ENCODE measurements at regions of chr20 and their contacts with region 1.

Region 1: GRCh38 chr20:34312544-34313217 is 9.5 kb upstream of the AHCY start:
- DNase-seq: no peak
- H3K4me3 ChIP-seq: peak overlapping the region; percentile 51
- CTCF ChIP-seq: peak; percentile 100

Region 2: DNA sequence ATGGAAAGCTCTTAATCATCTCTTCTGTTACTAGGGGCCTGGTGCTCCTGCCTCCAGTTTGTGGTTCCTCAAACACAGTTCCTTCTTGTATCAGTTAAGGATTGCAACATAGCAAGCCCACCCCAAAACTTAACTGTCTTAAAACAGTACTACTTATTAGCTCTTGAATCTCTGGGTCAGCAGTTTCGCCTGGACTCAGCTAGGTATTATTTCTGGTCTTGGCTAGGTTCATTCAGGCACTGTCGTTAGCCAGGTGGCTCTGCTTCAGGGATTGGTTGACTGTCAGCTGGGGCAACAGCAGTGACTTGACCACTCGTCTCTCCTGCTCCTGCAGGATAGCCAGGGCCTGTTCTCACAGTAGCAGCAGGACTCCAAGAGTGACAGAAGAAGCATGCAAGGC is 348.9 kb before region 1 on chr20:
- CTCF ChIA-PET with region 1: no interaction called
- POLR2A ChIA-PET with region 1: no interaction called
- DNase-seq: no peak
- H3K4me3 ChIP-seq: no peak overlapping the region
- CTCF ChIP-seq: no peak

Region 3: DNA sequence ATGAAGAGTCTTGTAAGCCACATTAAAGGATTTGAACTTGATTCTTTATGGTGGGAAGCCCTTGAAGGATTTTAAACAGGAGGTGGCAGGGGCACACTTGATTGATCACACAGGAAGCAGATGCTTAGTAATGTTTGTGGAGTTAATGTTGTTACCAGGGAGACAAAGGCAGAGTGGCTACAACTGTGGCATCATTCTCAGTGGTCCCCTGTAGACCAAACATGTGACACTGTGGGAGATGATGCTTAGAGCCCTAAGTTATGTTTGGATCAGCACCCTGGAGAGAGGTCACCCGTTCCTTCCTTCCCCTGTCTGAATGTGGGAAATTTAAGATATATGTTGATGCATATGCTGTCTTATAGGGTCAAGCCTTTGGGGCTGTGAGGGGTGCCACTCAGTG is 253.8 kb before region 1 on chr20:
- CTCF ChIA-PET with region 1: no interaction called
- POLR2A ChIA-PET with region 1: no interaction called
- DNase-seq: no peak
- H3K4me3 ChIP-seq: no peak overlapping the region
- CTCF ChIP-seq: no peak

Region 4: DNA sequence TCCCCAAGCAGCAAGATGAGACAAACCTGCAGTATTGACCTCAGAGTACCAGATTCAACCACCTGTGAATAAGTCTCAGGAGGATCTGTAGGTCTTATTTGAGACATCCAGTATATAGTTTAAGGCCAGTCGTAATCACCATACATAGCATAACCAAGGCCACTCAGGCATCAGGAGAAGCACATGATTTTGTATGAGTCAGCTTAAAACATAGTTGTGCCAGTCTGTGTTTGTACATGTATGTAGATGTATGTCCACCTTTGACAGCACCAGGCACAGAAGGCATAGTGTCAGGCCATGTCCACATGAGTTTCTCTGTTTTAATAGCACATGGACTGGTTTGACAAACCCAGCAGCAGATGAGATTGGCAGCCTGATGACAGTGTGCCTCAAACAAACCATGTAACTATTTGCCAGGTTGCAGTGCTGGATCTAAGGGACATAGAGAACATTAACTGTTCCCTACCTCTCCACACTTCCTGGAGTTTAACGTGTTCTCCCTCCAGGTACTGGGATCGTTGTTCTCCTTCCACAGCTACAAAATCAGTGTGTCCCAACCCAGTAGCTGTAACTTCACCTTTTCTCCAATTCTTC is 80.1 kb before region 1 on chr20:
- CTCF ChIA-PET with region 1: no interaction called
- POLR2A ChIA-PET with region 1: no interaction called
- DNase-seq: no peak
- H3K4me3 ChIP-seq: no peak overlapping the region
- CTCF ChIP-seq: no peak

Region 5: DNA sequence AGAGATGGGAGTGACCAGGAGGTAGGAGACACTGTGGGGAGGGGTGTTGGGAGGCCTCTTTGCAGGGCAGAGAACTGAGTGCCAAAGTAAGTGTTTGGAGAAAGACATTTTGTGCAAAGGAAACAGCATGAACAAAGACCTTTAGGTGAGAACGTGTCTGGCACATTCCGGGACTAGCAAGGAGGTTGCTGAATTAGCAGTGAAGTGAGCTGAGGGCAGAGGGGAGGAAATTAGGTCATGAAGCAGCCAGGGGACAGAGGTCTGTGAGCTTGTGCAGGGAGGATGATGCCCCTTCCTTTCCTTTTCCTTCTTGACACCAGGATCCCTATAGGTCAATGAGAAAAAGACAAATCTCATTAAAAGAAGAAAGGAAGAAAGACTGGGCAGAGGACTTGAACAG is 11.9 kb after region 1 on chr20:
- CTCF ChIA-PET with region 1: interaction called, 35 read pairs
- POLR2A ChIA-PET with region 1: no interaction called
- DNase-seq: no peak
- H3K4me3 ChIP-seq: no peak overlapping the region
- CTCF ChIP-seq: no peak

Region 6: DNA sequence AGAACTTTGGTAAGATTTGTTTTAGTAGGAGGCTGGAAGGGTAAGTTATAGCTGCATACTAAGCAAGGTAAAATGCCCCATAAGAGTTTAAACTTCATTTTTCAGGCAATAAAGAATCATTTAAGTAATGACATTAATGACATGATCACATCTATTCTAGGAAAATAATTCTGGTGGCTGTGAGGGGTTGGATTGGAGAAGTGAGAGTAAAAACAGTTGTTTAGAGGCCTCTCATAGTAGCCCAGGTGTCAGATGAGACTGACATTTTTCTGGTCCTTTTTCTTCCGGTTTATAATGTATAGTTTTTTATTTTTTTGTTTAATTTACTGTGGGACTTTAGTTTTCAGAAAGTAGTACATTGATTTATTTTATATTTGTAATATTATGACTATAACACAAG is 91.2 kb after region 1 on chr20:
- CTCF ChIA-PET with region 1: interaction called, 42 read pairs
- POLR2A ChIA-PET with region 1: no interaction called
- DNase-seq: no peak
- H3K4me3 ChIP-seq: no peak overlapping the region
- CTCF ChIP-seq: no peak

Region 7: GRCh38 chr20:34437330-34437986 is 124.8 kb after region 1 on chr20:
- CTCF ChIA-PET with region 1: interaction called, 46 read pairs
- POLR2A ChIA-PET with region 1: interaction called, 3 read pairs
- DNase-seq: peak; percentile 28
- H3K4me3 ChIP-seq: no peak overlapping the region
- CTCF ChIP-seq: no peak

Region 8: DNA sequence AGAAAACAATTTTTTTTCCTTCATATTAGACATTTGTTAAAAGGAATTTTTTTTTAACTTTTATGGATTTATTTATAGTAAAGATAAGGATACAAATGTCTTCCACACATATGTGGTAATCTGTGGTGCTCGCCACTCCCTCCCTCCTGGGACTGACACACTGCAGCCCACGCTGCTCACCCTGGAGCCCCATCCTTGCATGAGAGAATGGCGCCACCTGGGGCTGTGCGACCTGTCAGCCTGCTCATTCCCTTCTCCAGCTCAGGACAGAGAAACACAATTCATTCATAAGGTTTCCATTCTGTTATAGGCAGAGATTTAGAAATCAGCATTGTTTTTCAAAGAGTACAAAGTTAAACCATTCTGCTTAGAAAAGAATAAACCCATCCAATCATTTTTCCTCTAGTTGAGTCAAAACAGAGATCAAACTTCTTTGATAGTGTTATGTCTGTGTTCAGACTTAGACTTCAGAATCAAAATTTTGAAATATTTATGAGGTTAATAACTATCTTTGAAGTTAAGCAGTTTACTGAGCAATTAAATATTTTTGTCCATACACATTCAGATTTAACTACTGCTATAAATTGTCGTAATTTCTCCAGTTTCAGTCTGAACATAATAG is 160.7 kb after region 1 on chr20:
- CTCF ChIA-PET with region 1: interaction called, 79 read pairs
- POLR2A ChIA-PET with region 1: no interaction called
- DNase-seq: no peak
- H3K4me3 ChIP-seq: no peak overlapping the region
- CTCF ChIP-seq: peak; percentile 30

Region 9: GRCh38 chr20:34522969-34523871 is 210.5 kb after region 1 on chr20:
- CTCF ChIA-PET with region 1: interaction called, 99 read pairs
- POLR2A ChIA-PET with region 1: interaction called, 4 read pairs
- DNase-seq: peak; percentile 29
- H3K4me3 ChIP-seq: no peak overlapping the region
- CTCF ChIP-seq: peak; percentile 65

Region 10: DNA sequence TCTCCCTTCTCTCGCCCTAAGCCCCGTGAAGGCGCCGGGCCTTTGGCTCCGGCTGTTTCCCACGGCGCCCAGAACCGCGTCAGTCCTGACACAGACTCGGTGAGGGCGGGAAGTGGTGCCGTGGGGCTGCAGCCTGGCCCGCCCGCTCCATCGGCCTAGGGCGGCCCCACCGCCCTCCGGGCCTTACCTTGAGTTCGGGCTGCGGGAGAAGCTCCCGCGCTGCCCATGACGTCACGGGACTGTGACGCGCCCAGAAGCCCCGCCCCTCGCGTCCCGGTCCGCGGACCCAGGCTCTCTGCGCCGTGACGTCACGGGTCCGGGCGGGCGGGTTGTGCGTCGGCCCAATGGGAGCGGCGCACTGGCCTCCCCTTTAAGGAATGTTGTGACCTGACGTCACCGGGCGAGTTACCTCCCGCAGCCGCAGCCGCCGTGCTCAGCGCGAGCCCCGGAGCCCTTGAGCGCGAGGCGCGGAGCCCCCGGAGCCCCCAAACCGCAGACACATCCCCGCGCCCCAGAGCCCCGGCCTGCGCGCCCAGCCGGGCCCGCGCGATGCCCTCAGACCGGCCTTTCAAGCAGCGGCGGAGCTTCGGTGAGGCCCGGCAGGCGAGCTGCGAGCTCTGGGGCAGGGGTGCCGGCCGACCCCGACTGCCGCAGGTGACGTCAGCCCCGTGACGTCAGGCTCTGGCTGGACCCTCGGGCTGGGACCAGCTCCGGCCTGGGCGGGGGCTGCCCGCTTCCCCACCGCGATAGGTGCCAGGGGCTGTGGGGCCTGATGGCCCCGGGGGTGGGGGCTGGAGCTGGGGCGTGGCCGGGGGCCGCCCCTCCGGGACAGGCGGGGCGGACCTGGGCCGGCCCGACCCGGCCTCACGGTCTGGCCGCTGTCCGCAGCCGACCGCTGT is 245.9 kb after region 1 on chr20 and contains the start of gene MAP1LC3A:
- CTCF ChIA-PET with region 1: interaction called, 16 read pairs
- POLR2A ChIA-PET with region 1: no interaction called
- DNase-seq: peak; percentile 69
- H3K4me3 ChIP-seq: peak within 1 kb of the TSS; percentile 71
- CTCF ChIP-seq: no peak

Measured in AG04449 (cell line).